BJ (cell line): ENCODE measurements at regions of chr7 and their contacts with region 1.

Region 1: DNA sequence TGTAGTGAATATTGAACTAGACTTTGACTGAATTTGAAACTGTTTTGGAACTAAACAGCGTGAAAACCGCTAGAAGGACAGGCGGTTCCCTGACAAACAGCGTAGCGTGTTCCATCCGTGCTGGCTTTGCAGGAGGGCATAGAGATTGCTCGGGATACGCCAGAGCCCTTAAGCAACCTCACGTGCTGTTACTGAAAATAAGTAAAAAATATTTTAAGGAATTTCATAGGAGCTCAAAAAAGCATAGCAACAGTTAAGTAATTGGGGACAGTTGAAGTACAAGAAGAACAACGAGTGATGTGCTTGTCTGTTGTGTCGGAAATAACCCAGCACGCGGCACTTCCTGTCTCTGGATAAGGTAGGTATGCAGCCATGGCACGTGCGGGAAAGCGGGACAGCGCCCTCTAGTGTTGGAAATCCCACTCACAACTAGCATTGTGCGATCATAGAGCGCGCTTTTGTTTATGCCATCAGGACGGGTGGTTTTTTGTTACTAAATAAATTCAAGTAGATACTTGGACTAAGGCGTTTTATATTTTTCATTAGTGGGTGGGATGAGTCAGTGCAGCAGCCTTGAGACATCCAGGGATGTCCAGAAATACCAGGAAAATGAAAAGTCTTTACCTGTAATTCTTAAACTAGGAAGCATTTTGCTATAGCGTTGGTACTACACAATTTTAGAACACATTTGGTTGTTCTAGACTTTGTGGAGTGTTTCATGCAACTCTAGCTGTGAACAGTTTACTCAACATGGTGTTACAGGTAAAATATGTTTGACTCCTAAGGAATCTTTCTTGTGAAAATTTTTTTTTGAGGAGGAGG is 50.4 kb downstream of the DNAJB6 start:
- DNase-seq: peak; percentile 20
- H3K4me3 ChIP-seq: no peak overlapping the region
- H3K27me3 ChIP-seq: no peaks in the 10 kb centered on the region
- CTCF ChIP-seq: peak; percentile 89

Region 2: DNA sequence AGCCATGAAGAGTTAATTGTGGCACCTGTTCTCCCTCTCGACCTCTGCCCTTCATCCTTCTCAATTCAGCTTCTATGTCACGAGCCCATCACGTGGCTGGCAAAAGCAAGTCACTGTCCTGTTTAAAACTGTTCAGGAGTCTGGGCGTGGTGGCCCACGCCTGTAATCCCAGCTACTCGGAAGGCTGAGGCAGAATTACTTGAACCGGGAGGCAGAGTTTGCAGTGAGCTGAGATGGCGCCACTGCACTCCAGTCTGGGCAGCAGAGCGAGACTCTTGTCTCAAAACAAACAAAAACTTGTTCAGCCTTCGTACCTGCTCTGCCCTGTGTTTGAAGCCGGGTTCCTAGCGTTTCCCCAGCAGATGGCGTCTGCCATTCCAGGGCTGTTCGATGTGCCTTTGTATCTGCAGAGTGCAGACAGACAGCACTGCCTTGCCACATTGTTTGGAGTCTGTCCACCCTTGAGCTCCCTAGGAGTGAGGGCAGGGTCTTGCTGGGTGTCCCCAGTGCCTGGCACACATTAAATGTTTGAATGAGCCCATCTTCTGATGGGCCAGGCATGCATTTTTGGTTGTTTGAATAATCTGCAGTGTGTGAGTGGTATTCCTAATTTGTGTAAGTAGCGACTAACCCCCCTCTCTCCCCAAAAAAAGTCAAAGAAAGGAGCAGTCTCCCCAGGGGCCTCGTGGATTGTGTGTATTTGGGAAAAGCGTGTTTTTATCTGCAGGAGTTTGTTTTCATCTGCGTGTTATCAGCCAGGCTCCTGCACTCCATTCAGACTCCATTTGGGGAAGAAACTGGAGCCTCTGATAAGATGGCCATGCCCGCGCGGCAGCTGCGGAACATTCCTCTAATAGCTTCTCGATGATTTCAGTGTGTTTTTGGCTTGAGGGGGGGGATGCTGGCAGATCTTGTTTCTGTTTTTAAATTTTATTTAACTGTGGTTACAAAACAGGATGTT is 10.8 kb after region 1 on chr7:
- CTCF ChIA-PET with region 1: interaction called, 24 read pairs
- POLR2A ChIA-PET with region 1: no interaction called
- DNase-seq: peak; percentile 78
- H3K4me3 ChIP-seq: no peak overlapping the region
- H3K27me3 ChIP-seq: no peaks in the 10 kb centered on the region
- CTCF ChIP-seq: peak; percentile 72